HEK293 (cell line): ENCODE measurements at regions of chr6 and their contacts with region 1.

Region 1: GRCh38 chr6:20056350-20056992 is 155.8 kb downstream of the MBOAT1 start:
- H3K4me3 ChIP-seq: no peak overlapping the region
- H3K27ac ChIP-seq: no peak overlapping the region
- H3K4me1 ChIP-seq: no peaks in the 10 kb centered on the region
- CTCF ChIP-seq: peak; percentile 34; the same call in 1 of the 2 replicates

Region 2: GRCh38 chr6:18595774-18596530 is 1460.5 kb before region 1 on chr6:
- CTCF ChIA-PET with region 1: interaction called, 12 read pairs
- POLR2A ChIA-PET with region 1: no interaction called
- H3K4me3 ChIP-seq: no peak overlapping the region
- H3K27ac ChIP-seq: no peak overlapping the region
- H3K4me1 ChIP-seq: no peaks in the 10 kb centered on the region
- CTCF ChIP-seq: peak; percentile 63

Region 3: DNA sequence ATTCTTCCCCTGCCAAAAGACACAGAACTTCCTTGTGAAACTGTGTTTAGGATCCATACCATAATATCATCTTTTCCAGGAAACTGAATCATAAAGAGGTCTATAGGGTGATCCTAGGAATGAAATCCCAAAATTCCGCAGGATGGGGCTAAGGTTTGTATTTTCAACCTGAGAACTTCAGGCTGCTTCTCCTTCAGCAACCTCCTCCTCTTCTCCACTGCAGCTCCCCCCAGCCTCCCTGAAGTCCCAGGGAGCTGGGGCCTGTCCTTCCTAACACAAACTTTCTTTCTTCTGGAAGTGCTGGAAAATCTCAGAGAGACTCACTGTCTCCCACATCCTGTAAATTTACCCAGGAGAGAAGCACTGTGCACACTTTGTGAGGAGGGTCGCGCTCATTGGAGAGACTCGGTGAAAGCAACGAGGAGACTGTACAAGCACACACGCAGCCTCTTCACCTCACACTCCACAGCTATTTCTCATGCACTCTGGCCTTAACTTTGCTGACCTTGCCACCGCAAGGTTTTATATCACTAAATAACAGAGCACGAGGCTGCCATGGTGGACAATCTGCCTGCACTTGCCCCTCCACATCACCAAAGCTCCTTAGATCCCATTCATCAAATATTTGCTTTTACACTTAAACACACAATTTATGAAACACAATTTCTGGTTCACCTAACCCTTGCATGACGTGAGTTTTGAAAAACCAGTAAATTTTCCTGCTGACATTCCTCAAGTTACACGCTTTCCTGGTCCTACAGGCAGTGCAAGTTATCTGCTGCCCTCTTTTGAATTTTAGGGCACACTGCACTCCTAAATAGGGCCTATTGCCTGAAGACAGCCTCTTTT is 205.0 kb before region 1 on chr6:
- CTCF ChIA-PET with region 1: interaction called, 11 read pairs
- POLR2A ChIA-PET with region 1: no interaction called
- H3K4me3 ChIP-seq: no peak overlapping the region
- H3K27ac ChIP-seq: peak overlapping the region; percentile 54; the same call in 1 of the 2 replicates
- H3K4me1 ChIP-seq: peaks cover 13% of the 10 kb centered on the region
- CTCF ChIP-seq: peak; percentile 65

Region 4: DNA sequence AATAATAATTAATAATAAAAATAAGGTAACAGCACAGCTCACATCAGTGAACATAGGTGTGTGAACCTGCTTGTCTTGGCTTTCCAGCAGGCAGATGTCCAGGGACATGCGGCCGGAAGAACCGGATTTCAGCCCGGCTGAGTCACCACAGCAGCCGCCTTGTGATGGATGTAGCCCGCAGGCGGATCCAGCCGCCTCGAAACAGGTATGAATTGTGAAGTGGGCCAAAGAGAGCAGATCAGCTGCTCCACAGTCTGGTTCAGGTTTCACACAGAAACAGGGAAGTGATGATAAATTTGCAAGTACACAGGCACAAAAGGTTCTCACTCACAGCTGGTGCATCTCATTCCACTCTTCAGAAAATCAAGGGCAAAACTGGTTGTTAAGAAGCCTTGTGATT is 164.2 kb before region 1 on chr6:
- CTCF ChIA-PET with region 1: interaction called, 11 read pairs
- POLR2A ChIA-PET with region 1: no interaction called
- H3K4me3 ChIP-seq: no peak overlapping the region
- H3K27ac ChIP-seq: no peak overlapping the region
- H3K4me1 ChIP-seq: no peaks in the 10 kb centered on the region
- CTCF ChIP-seq: no peak

Region 5: DNA sequence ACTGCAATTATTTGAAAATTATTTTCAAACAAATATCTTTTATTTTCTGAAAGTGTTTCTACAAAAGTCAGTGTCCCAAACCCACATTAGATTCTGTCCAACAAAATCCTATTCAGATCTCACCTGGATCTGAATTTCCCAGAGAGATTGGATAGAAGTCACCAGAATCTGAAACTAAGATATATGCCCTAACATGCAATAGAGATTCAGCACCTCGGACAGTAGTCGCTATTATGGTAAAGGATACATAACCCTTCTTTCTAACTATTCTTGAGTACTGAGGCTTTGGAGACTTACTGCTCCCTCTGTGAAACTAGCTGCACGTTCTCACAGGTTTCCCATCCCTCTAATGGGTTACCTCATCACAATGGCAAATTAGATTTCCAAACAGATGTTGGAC is 67.9 kb before region 1 on chr6:
- CTCF ChIA-PET with region 1: no interaction called
- POLR2A ChIA-PET with region 1: no interaction called
- H3K4me3 ChIP-seq: no peak overlapping the region
- H3K27ac ChIP-seq: no peak overlapping the region
- H3K4me1 ChIP-seq: no peaks in the 10 kb centered on the region
- CTCF ChIP-seq: no peak

Region 6: GRCh38 chr6:20085817-20086216 is 29.3 kb after region 1 on chr6:
- CTCF ChIA-PET with region 1: no interaction called
- POLR2A ChIA-PET with region 1: no interaction called
- H3K4me3 ChIP-seq: no peak overlapping the region
- H3K27ac ChIP-seq: no peak overlapping the region
- H3K4me1 ChIP-seq: no peaks in the 10 kb centered on the region
- CTCF ChIP-seq: no peak